CD4-positive, alpha-beta T cell (primary cell): ENCODE measurements at regions of chr9 and their contacts with region 1.

Region 1: DNA sequence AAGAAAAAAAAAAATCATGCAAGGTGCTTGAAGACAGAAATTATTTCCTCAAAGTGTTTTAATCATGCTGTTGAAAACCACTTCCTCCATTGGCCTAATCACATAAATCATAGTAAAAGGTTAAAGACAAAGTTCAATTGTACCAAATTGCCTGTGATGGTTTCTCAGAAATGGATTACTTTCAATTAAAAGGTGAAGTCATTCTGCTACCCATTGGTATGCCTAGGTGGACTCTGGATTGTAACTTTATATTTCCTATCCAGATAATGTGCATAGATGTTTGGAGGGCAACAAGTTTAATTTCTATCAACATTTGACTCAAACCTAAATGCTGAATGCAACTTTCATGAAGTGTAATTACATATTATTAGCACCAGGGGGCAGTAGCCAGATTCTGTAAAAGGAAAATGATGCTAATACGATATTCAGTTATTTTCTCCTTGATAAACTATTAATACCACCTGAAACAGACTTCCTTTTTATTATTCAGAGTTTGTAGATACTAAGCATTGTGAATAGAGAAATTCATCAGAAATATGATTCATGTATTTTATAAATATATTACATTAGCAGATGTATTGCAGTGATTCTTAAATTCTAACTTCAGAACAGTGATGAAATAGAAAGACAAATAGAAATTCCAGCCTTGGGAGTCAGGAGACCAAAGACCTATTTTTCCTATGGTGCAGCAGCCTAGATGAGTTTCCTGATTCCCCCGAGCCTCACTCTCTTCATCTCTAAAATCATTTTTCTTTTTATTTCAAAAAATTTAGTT is 148.2 kb downstream of the CAAP1 start:
- DNase-seq: peak in 3 of 14 experiments; percentile 11 to 36 (median 20)
- ATAC-seq: no peak
- H3K4me3 ChIP-seq: no peak overlapping the region
- H3K4me3 Mint-ChIP-seq: no peak overlapping the region
- H3K27ac ChIP-seq: no peak overlapping the region
- H3K27ac Mint-ChIP-seq: no peak overlapping the region
- H3K4me1 ChIP-seq: no peaks in the 10 kb centered on the region
- H3K4me1 Mint-ChIP-seq: peaks cover 3% of the 10 kb centered on the region
- H3K27me3 ChIP-seq: no peaks in the 10 kb centered on the region
- H3K27me3 Mint-ChIP-seq: peaks cover 14% of the 10 kb centered on the region
- CTCF ChIP-seq: peak; percentile 78

Region 2: GRCh38 chr9:26142631-26143030 is 601.7 kb before region 1 on chr9:
- CTCF ChIA-PET with region 1: no interaction called
- POLR2A ChIA-PET with region 1: no interaction called
- intact Hi-C with region 1: no loop called
- DNase-seq: no peak
- ATAC-seq: no peak
- H3K4me3 ChIP-seq: no peak overlapping the region
- H3K4me3 Mint-ChIP-seq: no peak overlapping the region
- H3K27ac ChIP-seq: no peak overlapping the region
- H3K27ac Mint-ChIP-seq: no peak overlapping the region
- H3K4me1 ChIP-seq: no peaks in the 10 kb centered on the region
- H3K4me1 Mint-ChIP-seq: no peaks in the 10 kb centered on the region
- H3K27me3 ChIP-seq: no peaks in the 10 kb centered on the region
- H3K27me3 Mint-ChIP-seq: no peaks in the 10 kb centered on the region
- CTCF ChIP-seq: no peak

Region 3: GRCh38 chr9:26975693-26976059 is 231.3 kb after region 1 on chr9:
- CTCF ChIA-PET with region 1: no interaction called
- POLR2A ChIA-PET with region 1: no interaction called
- intact Hi-C with region 1: loop called (anchors 1 to 2 kb)
- DNase-seq: peak in 4 of 14 experiments; percentile 22 to 49 (median 36)
- ATAC-seq: no peak
- H3K4me3 ChIP-seq: no peak overlapping the region
- H3K4me3 Mint-ChIP-seq: no peak overlapping the region
- H3K27ac ChIP-seq: no peak overlapping the region
- H3K27ac Mint-ChIP-seq: no peak overlapping the region
- H3K4me1 ChIP-seq: no peaks in the 10 kb centered on the region
- H3K4me1 Mint-ChIP-seq: no peaks in the 10 kb centered on the region
- H3K27me3 ChIP-seq: no peaks in the 10 kb centered on the region
- H3K27me3 Mint-ChIP-seq: no peaks in the 10 kb centered on the region
- CTCF ChIP-seq: peak; percentile 34

Region 4: GRCh38 chr9:27276193-27277030 is 532.0 kb after region 1 on chr9:
- CTCF ChIA-PET with region 1: no interaction called
- POLR2A ChIA-PET with region 1: no interaction called
- intact Hi-C with region 1: loop called in 1 of 2 experiments (anchors 2 kb)
- DNase-seq: peak in 4 of 14 experiments; percentile 9 to 51 (median 44)
- ATAC-seq: no peak
- H3K4me3 ChIP-seq: no peak overlapping the region
- H3K4me3 Mint-ChIP-seq: no peak overlapping the region
- H3K27ac ChIP-seq: no peak overlapping the region
- H3K27ac Mint-ChIP-seq: no peak overlapping the region
- H3K4me1 ChIP-seq: no peaks in the 10 kb centered on the region
- H3K4me1 Mint-ChIP-seq: no peaks in the 10 kb centered on the region
- H3K27me3 ChIP-seq: no peaks in the 10 kb centered on the region
- H3K27me3 Mint-ChIP-seq: peaks cover 4% of the 10 kb centered on the region
- CTCF ChIP-seq: peak; percentile 89